H1 (cell line): ENCODE measurements at regions of chr18 and their contacts with region 1.

Region 1: DNA sequence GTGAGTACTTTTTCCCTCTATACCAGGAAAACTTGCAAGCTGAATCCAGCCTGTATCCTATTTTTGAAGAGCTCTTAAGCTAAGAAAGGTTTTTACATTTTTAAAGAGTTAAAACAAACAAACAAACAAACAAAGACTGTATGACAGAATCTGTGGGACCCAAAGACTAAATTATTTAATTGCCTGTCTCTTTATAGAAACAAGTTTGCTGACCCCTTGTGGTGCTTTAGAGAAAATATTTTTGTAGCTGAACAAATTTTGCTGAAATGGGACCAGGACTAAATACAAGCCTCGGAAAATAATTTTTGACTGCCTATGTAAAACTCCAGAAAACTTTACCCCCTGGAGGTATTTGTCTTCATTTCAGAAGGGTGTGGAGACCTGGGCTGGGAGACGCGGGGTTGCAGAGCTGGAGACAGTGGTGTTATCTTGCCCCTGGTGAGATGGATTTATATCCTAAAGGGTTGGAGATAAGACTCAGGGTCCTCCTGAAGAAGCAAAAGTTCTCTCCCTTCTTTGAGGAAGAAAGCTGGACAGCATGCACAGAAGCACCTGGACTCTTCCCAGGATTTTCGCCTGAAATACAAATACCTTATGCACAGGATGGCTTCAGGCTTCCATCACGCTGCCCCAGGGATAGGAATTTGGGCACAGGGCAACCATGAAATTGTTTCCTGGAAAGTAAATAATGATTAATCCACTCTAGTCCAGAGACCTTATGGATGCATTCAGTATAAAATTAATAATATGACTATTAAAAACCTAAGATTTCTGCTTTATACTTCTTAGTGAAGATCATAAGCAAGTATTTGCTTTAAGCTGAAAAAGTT is 54.3 kb downstream of the TMX3 start:
- DNase-seq: no peak
- H3K4me3 ChIP-seq: no peak overlapping the region
- H3K27ac ChIP-seq: no peak overlapping the region
- H3K4me1 ChIP-seq: no peaks in the 10 kb centered on the region
- H3K27me3 ChIP-seq: no peaks in the 10 kb centered on the region
- CTCF ChIP-seq: peak in 2 of 3 experiments; percentile 17 to 40; a peak in 2 of 4 replicates
- EP300 ChIP-seq: no peak
- POLR2A ChIP-seq: no peak
- RAD21 ChIP-seq: peak; percentile 65 to 70

Region 2: DNA sequence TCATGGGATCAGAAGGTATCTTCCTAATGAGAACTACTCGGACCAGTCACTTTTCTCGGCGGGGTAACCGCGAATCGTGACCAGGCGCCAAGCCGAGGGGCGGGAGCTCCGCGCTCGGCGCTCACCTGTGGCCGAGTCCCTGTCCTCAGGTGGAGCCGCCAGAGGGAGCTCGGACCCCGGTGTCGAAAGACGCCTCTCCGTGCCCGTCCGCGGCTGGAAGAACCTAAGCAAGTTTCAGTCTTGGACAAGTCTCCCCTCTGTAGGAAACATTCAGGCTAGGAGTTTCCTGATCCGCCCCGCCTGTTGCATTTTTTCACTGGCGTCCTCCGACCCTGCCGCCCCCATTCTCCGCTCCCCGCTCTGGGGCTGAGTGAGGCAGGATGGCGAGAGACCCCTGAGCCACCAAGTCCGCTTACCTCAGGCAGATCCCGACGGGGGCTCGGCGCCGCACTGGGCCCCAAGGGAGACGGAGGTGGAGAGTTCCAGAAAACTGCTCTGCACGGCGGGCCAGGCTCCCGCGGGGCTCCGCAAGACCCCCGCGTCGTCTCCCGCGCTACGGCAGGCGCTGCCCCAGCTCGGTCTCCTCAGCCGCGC is 1144.5 kb before region 1 on chr18:
- CTCF ChIA-PET with region 1: interaction called, 23 read pairs
- POLR2A ChIA-PET with region 1: no interaction called
- DNase-seq: peak in 1 of 2 experiments; percentile 91
- H3K4me3 ChIP-seq: peak overlapping the region; percentile 58 to 90 (median 82)
- H3K27ac ChIP-seq: no peak overlapping the region
- H3K4me1 ChIP-seq: peaks cover 2 to 8% (median 4%) of the 10 kb centered on the region in 4 experiments; a peak in 6 of 7 replicates
- H3K27me3 ChIP-seq: no peaks in the 10 kb centered on the region
- CTCF ChIP-seq: peak; percentile 75 to 87 (median 77)
- EP300 ChIP-seq: no peak
- POLR2A ChIP-seq: 0 out of 3 replicates have a peak, but pooled peaks of 1 of the 2 experiments have one; percentile 17
- RAD21 ChIP-seq: peak; percentile 92 to 93

Region 3: GRCh38 chr18:68642003-68642402 is 18.6 kb before region 1 on chr18:
- CTCF ChIA-PET with region 1: interaction called, 10 read pairs
- POLR2A ChIA-PET with region 1: no interaction called
- DNase-seq: no peak
- H3K4me3 ChIP-seq: no peak overlapping the region
- H3K27ac ChIP-seq: no peak overlapping the region
- H3K4me1 ChIP-seq: peaks cover 0 to 2% (median 0%) of the 10 kb centered on the region in 4 experiments; a peak in 1 of 7 replicates
- H3K27me3 ChIP-seq: no peaks in the 10 kb centered on the region
- CTCF ChIP-seq: no peak
- EP300 ChIP-seq: no peak
- POLR2A ChIP-seq: no peak
- RAD21 ChIP-seq: no peak

Region 4: DNA sequence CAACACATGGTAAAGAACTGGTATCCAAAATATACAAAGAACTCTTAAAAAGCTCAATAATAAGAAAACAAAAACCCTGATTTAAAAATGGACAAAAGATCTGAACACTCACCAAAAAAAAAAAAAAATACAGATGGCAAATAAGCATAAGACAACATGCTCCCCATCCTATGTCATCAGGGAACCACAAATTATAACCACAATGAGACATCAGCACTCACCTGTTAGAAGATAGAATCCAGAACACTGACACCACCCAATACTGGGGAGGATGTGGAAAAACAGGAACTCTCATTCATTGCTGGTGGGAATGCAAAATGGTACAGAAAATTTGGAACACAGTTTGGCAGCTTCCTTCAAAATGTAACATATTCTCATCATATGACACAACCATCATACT is 12.4 kb before region 1 on chr18:
- CTCF ChIA-PET with region 1: interaction called, 16 read pairs
- POLR2A ChIA-PET with region 1: no interaction called
- DNase-seq: no peak
- H3K4me3 ChIP-seq: no peak overlapping the region
- H3K27ac ChIP-seq: no peak overlapping the region
- H3K4me1 ChIP-seq: peaks cover 0 to 4% (median 0%) of the 10 kb centered on the region in 4 experiments; a peak in 2 of 7 replicates
- H3K27me3 ChIP-seq: no peaks in the 10 kb centered on the region
- CTCF ChIP-seq: no peak
- EP300 ChIP-seq: no peak
- POLR2A ChIP-seq: no peak
- RAD21 ChIP-seq: no peak

Region 5: DNA sequence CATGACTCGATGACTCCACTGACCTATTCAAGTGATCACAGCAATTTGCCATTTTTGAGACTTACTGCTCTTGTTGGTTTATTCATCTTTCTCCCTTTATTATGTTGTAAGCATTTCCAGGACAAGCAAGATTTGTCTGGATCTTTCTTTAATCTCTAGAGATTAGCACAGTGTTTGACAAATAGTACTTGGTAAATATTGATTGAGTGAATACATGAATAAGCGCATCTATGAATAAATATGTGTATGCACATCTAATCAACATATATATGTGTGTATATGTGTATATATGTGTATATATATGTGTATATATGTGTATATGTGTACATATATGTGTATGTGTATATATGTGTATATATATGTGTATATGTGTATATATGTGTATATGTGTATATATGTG is 47.1 kb after region 1 on chr18:
- CTCF ChIA-PET with region 1: no interaction called
- POLR2A ChIA-PET with region 1: no interaction called
- DNase-seq: no peak
- H3K4me3 ChIP-seq: no peak overlapping the region
- H3K27ac ChIP-seq: no peak overlapping the region
- H3K4me1 ChIP-seq: no peaks in the 10 kb centered on the region
- H3K27me3 ChIP-seq: no peaks in the 10 kb centered on the region
- CTCF ChIP-seq: no peak
- EP300 ChIP-seq: no peak
- POLR2A ChIP-seq: no peak
- RAD21 ChIP-seq: no peak

Region 6: DNA sequence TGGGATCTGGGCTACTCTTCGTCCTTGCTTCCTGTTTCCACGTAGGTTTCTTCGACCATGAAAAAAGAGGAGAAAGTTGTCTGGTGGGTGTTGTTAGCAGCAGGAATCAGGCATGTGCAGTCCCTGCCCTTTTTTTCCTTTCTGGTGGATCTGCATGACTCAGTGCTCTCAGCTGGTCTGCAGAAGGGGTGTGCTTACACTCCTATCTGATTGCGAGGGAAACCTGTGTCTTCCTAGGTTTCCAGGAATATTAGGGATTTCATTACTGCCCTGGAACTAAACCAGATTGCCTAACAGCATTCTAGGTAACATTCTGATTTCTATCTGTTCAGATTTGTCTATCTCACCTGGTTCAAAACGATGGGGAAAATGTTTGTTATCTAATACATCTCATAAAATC is 311.6 kb after region 1 on chr18:
- CTCF ChIA-PET with region 1: no interaction called
- POLR2A ChIA-PET with region 1: no interaction called
- DNase-seq: no peak
- H3K4me3 ChIP-seq: no peak overlapping the region
- H3K27ac ChIP-seq: no peak overlapping the region
- H3K4me1 ChIP-seq: peaks cover 0 to 4% (median 0%) of the 10 kb centered on the region in 4 experiments; a peak in 1 of 7 replicates
- H3K27me3 ChIP-seq: no peaks in the 10 kb centered on the region
- CTCF ChIP-seq: no peak
- EP300 ChIP-seq: no peak
- POLR2A ChIP-seq: no peak
- RAD21 ChIP-seq: no peak

Region 7: GRCh38 chr18:69064063-69064462 is 403.5 kb after region 1 on chr18:
- CTCF ChIA-PET with region 1: no interaction called
- POLR2A ChIA-PET with region 1: no interaction called
- DNase-seq: no peak
- H3K4me3 ChIP-seq: no peak overlapping the region
- H3K27ac ChIP-seq: no peak overlapping the region
- H3K4me1 ChIP-seq: no peaks in the 10 kb centered on the region
- H3K27me3 ChIP-seq: no peaks in the 10 kb centered on the region
- CTCF ChIP-seq: no peak
- EP300 ChIP-seq: no peak
- POLR2A ChIP-seq: no peak
- RAD21 ChIP-seq: no peak